ENCODE measurements at regions of chr9 and their contacts with region 1.

Region 1: DNA sequence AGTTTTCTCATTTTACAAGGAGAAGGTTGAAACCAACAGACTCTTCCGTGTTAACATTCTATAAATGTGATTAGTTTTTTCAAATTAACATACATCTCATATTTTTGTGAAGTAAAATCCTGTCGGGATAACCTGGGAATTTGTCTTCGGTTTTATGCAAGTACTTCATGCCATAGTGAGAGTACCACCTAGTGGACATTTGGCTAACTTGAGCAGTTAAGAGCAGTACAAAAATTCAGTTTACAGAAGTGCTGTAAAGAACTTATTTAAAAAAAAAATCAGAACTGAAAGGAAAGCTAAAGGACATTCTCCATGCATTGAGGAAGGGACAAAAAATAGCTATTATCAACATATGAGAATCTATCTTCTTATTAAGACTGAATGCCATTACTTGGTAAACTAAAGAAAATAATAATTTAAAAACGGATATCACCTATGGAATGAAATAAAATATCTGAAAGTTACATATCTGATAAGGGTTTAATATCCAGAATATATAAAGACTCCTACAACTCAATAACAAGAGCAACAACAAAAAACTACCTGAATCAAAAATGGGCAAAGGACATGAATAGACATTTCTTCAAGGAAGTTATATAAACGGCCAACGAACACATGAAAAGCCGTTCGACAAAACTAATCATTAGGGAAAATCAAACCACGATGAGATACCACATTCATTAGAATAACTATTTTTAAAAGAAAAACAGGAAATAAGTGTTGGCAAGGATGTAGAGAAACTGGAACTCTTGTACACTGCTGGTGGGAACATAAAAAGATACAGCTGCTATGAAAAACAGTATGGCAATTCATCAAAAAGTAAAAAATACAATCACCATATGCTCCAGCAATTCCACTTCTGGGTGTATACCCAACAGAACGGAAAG is 117.0 kb upstream of the GNA14 start:
- DNase-seq: no peak
- ATAC-seq: peak; percentile 70
- H3K4me3 ChIP-seq: no peak overlapping the region
- H3K27ac ChIP-seq: no peak overlapping the region
- H3K4me1 ChIP-seq: no peaks in the 10 kb centered on the region
- H3K27me3 ChIP-seq: no peaks in the 10 kb centered on the region
- CTCF ChIP-seq: peak; percentile 28 to 47 (median 43); a peak in 4 of 6 replicates
- EP300 ChIP-seq: no peak
- POLR2A ChIP-seq: no peak
- RAD21 ChIP-seq: peak; percentile 30; the same call in 1 of the 2 replicates

Region 2: GRCh38 chr9:77707383-77708063 is 57.6 kb before region 1 on chr9:
- CTCF ChIA-PET with region 1: no interaction called
- POLR2A ChIA-PET with region 1: no interaction called
- RAD21 ChIA-PET with region 1: no interaction called
- SMC1A ChIA-PET with region 1: no interaction called
- in situ Hi-C with region 1: no loop called
- intact Hi-C with region 1: no loop called
- DNase-seq: no peak
- ATAC-seq: no peak
- H3K4me3 ChIP-seq: no peak overlapping the region
- H3K27ac ChIP-seq: no peak overlapping the region
- H3K4me1 ChIP-seq: no peaks in the 10 kb centered on the region
- H3K27me3 ChIP-seq: no peaks in the 10 kb centered on the region
- CTCF ChIP-seq: no peak
- EP300 ChIP-seq: no peak
- POLR2A ChIP-seq: no peak
- RAD21 ChIP-seq: no peak

Region 3: DNA sequence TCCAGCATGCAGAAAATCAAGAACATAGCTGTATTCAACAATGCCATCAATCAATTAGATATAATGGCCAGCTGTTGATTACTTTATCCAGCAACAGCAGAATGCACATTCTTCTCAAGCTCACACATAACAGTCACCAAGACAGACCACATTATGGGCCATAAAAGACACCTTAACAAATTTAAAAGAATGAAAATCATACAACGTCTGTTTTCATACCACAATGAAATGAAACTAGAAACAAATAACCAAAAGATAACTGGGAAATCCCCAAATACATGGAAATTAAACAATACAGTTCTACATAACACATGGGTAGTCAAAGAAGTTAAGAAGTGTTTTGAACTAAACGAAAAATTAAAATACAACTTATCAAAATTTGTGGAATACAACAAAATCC is 13.9 kb after region 1 on chr9:
- CTCF ChIA-PET with region 1: no interaction called
- POLR2A ChIA-PET with region 1: no interaction called
- RAD21 ChIA-PET with region 1: no interaction called
- SMC1A ChIA-PET with region 1: interaction called, 11 read pairs
- in situ Hi-C with region 1: no loop called
- intact Hi-C with region 1: no loop called
- DNase-seq: no peak
- ATAC-seq: peak; percentile 62
- H3K4me3 ChIP-seq: no peak overlapping the region
- H3K27ac ChIP-seq: no peak overlapping the region
- H3K4me1 ChIP-seq: no peaks in the 10 kb centered on the region
- H3K27me3 ChIP-seq: no peaks in the 10 kb centered on the region
- CTCF ChIP-seq: no peak
- EP300 ChIP-seq: no peak
- POLR2A ChIP-seq: no peak
- RAD21 ChIP-seq: no peak